Activated CD4-positive, alpha-beta memory T cell treated with anti-CD3 and anti-CD28 coated beads, Interleukin-2, amount 10 ng/mL, durations not matched to agents 7 days and 5 days (primary cell): ENCODE measurements at regions of chr4 and their contacts with region 1.

Region 1: DNA sequence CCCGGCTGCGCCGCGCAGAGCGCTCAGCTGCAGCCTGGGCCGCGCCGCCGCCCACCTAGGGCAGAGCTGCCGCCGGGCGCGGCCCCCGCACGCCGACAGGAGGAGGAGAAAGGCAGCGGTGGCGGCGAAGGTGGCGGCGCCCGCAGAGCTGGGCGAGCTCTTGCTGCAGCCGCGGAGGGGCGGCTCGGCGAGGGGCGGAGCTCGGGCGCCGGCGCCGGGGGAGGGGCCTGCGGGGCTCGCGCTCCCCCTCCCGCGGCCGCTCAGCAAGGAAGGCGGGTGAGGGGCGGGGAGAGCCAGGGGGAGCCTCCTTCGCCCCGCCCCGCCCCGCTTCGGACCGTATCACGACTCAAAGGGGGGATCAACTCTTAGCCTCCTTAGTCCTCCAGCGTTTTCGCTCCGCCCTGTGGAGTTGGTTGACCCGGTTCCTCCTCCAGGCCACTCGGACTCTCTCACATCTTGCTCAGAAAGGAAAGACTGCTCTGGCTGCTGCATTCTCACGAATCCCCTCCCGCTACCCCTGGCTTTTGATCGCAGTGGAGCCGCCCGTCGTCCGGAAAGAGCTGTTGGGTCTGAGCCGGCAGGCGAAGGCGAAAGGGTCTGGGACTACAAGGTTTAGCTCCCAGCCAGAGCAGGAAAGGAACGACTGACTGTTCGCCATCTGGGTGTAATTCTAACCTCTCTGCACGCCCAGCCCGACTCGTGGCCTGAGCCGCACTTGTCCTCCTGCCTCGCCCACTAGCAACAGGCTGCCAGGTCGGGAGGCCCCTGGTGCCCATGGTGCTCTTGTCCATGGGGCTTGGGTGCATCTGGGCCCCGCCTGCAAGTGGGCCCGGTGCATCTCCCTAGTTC is at the start of gene ATP8A1:
- DNase-seq: peak; percentile 94
- H3K4me3 Mint-ChIP-seq: peak within 1 kb of the TSS; percentile 93
- H3K27ac Mint-ChIP-seq: peak within 1 kb of the TSS; percentile 96
- H3K4me1 Mint-ChIP-seq: peaks cover 38% of the 10 kb centered on the region
- H3K27me3 Mint-ChIP-seq: peaks cover 7% of the 10 kb centered on the region
- total RNA-seq, gene ATP8A1: 18.7 to 19.8 TPM

Region 2: GRCh38 chr4:42633605-42634388 is 23.4 kb before region 1 on chr4:
- CTCF ChIA-PET with region 1: no interaction called
- POLR2A ChIA-PET with region 1: interaction called, 16 read pairs
- DNase-seq: no peak
- H3K4me3 Mint-ChIP-seq: no peak overlapping the region
- H3K27ac Mint-ChIP-seq: peak overlapping the region; percentile 4
- H3K4me1 Mint-ChIP-seq: peaks cover 21% of the 10 kb centered on the region
- H3K27me3 Mint-ChIP-seq: no peaks in the 10 kb centered on the region

Region 3: GRCh38 chr4:42646013-42646784 is 11.0 kb before region 1 on chr4:
- CTCF ChIA-PET with region 1: interaction called, 7 read pairs
- POLR2A ChIA-PET with region 1: interaction called, 28 read pairs
- DNase-seq: no peak
- H3K4me3 Mint-ChIP-seq: no peak overlapping the region
- H3K27ac Mint-ChIP-seq: no peak overlapping the region
- H3K4me1 Mint-ChIP-seq: peaks cover 23% of the 10 kb centered on the region
- H3K27me3 Mint-ChIP-seq: no peaks in the 10 kb centered on the region

Region 4: GRCh38 chr4:42673082-42673425 is 15.9 kb after region 1 on chr4:
- CTCF ChIA-PET with region 1: interaction called, 18 read pairs
- POLR2A ChIA-PET with region 1: interaction called, 49 read pairs
- DNase-seq: no peak
- H3K4me3 Mint-ChIP-seq: no peak overlapping the region
- H3K27ac Mint-ChIP-seq: peak overlapping the region; percentile 23
- H3K4me1 Mint-ChIP-seq: peaks cover 35% of the 10 kb centered on the region
- H3K27me3 Mint-ChIP-seq: peaks cover 1% of the 10 kb centered on the region

Region 5: GRCh38 chr4:42678512-42678911 is 21.3 kb after region 1 on chr4:
- CTCF ChIA-PET with region 1: interaction called, 18 read pairs
- POLR2A ChIA-PET with region 1: interaction called, 49 read pairs
- DNase-seq: no peak
- H3K4me3 Mint-ChIP-seq: no peak overlapping the region
- H3K27ac Mint-ChIP-seq: no peak overlapping the region
- H3K4me1 Mint-ChIP-seq: no peaks in the 10 kb centered on the region
- H3K27me3 Mint-ChIP-seq: no peaks in the 10 kb centered on the region